Activated CD8-positive, alpha-beta T cell treated with anti-CD3 and anti-CD28 coated beads, Interleukin-2, amount 10 ng/mL, durations not matched to agents 7 days and 5 days (primary cell): ENCODE measurements at regions of chr3 and their contacts with region 1.

Region 1: GRCh38 chr3:128322066-128323022 is 144.3 kb downstream of the DNAJB8 start:
- DNase-seq: peak; percentile 67
- ATAC-seq: peak; percentile 59
- H3K4me3 Mint-ChIP-seq: no peak overlapping the region
- H3K27ac Mint-ChIP-seq: no peak overlapping the region
- H3K4me1 Mint-ChIP-seq: peaks cover 22% of the 10 kb centered on the region
- H3K27me3 Mint-ChIP-seq: no peaks in the 10 kb centered on the region

Region 2: GRCh38 chr3:128226795-128227395 is 95.4 kb before region 1 on chr3:
- CTCF ChIA-PET with region 1: interaction called, 12 read pairs
- POLR2A ChIA-PET with region 1: no interaction called
- DNase-seq: peak; percentile 48
- ATAC-seq: peak; percentile 71
- H3K4me3 Mint-ChIP-seq: no peak overlapping the region
- H3K27ac Mint-ChIP-seq: no peak overlapping the region
- H3K4me1 Mint-ChIP-seq: peaks cover 3% of the 10 kb centered on the region
- H3K27me3 Mint-ChIP-seq: no peaks in the 10 kb centered on the region

Region 3: GRCh38 chr3:128241741-128242140 is 80.6 kb before region 1 on chr3:
- CTCF ChIA-PET with region 1: interaction called, 10 read pairs
- POLR2A ChIA-PET with region 1: no interaction called
- DNase-seq: no peak
- ATAC-seq: no peak
- H3K4me3 Mint-ChIP-seq: no peak overlapping the region
- H3K27ac Mint-ChIP-seq: no peak overlapping the region
- H3K4me1 Mint-ChIP-seq: peaks cover 16% of the 10 kb centered on the region
- H3K27me3 Mint-ChIP-seq: no peaks in the 10 kb centered on the region

Region 4: GRCh38 chr3:128307029-128307633 is 15.2 kb before region 1 on chr3:
- CTCF ChIA-PET with region 1: interaction called, 19 read pairs
- POLR2A ChIA-PET with region 1: interaction called, 3 read pairs
- DNase-seq: peak; percentile 17
- ATAC-seq: no peak
- H3K4me3 Mint-ChIP-seq: no peak overlapping the region
- H3K27ac Mint-ChIP-seq: no peak overlapping the region
- H3K4me1 Mint-ChIP-seq: no peaks in the 10 kb centered on the region
- H3K27me3 Mint-ChIP-seq: no peaks in the 10 kb centered on the region